Mammary epithelial cell (primary cell): ENCODE measurements at regions of chr9 and their contacts with region 1.

Region 1: GRCh38 chr9:115524453-115525059 is 406.6 kb upstream of the TNC start:
- DNase-seq: peak; percentile 60
- H3K4me3 ChIP-seq: no peak overlapping the region
- H3K27ac ChIP-seq: no peak overlapping the region
- H3K4me1 ChIP-seq: no peaks in the 10 kb centered on the region
- H3K27me3 ChIP-seq: no peaks in the 10 kb centered on the region
- CTCF ChIP-seq: peak; percentile 69 to 80

Region 2: GRCh38 chr9:114738581-114739316 is 785.8 kb before region 1 on chr9:
- CTCF ChIA-PET with region 1: no interaction called
- dilution Hi-C with region 1: no loop called
- in situ Hi-C with region 1: no loop called
- intact Hi-C with region 1: loop called (anchors 2 kb)
- DNase-seq: peak; percentile 78
- H3K4me3 ChIP-seq: no peak overlapping the region
- H3K27ac ChIP-seq: no peak overlapping the region
- H3K4me1 ChIP-seq: peaks cover 5% of the 10 kb centered on the region
- H3K27me3 ChIP-seq: no peaks in the 10 kb centered on the region
- CTCF ChIP-seq: peak; percentile 71 to 81

Region 3: DNA sequence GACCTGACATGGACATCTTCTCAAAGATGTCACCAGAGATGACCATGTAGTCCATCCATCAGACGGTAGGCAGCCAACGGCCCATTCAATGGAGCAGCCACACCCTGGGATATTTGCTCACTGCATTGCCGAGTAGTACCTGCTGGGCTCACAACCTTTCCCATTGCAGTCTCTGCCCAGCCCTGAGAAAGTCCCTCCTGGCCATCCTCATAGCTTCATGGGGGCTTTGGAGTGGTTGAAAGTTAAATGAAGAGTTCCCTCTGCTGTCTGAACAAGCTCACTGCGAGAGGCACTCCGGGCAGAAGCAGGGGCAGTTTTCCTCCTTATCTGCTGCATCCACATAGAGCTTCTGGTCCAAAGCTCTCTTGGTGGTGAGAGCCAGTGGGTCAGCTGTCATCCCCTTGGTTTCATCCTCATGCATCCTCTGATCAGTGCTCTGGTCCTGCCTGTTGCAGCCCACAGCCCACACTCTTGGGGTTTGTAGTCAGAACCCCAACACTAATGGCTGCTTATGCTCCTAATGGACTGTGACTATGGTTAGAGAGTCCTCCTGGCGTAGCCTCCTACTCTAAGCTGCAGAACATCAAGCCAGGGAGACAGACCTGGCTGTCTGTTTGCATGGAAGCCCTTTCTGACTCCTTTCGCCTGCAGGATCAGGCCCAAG is 617.5 kb before region 1 on chr9:
- CTCF ChIA-PET with region 1: no interaction called
- dilution Hi-C with region 1: no loop called
- in situ Hi-C with region 1: no loop called
- intact Hi-C with region 1: loop called (anchors 1 kb)
- DNase-seq: peak; percentile 48
- H3K4me3 ChIP-seq: no peak overlapping the region
- H3K27ac ChIP-seq: no peak overlapping the region
- H3K4me1 ChIP-seq: peaks cover 31% of the 10 kb centered on the region
- H3K27me3 ChIP-seq: no peaks in the 10 kb centered on the region
- CTCF ChIP-seq: peak; percentile 61 to 62

Region 4: DNA sequence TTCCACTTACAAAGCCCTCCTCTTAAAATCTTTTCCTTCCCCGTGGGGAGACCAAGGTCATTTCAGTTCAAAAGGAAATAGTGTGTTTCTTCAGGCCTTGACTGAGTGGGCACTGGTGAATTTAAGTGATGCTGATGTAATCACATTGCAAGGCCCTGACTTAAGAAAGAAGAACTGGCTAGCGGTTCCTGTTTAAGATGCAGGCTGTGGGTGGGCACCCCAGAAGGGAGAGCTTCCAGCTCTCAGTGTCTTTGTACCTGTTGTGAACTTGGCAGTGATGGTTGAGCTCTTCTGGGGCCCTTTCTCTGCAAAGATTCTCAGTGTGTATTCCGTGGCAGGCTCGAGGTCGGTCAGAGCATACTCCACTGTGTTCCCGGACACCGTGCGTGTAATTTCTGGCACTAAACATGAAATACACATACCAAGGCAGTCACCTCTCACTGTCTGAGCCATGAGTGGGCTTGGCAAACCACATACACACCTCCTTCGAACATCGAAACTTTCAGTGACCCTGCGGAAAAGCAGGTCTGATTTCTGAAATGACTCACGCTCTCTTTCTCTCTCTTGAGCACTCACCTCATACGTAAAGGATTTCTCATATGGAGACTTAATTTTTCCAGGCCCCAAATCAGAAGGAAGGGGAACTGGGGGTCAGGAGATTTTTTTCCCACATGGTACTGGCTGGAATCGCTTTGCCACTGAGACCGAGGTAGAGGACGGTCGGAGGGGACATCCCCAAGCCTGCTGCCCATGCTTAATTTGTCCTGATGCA is 488.5 kb before region 1 on chr9:
- CTCF ChIA-PET with region 1: no interaction called
- dilution Hi-C with region 1: no loop called
- in situ Hi-C with region 1: no loop called
- intact Hi-C with region 1: loop called (anchors 1 kb)
- DNase-seq: peak; percentile 99
- H3K4me3 ChIP-seq: no peak overlapping the region
- H3K27ac ChIP-seq: peak overlapping the region; percentile 99
- H3K4me1 ChIP-seq: peaks cover 34% of the 10 kb centered on the region
- H3K27me3 ChIP-seq: no peaks in the 10 kb centered on the region
- CTCF ChIP-seq: no peak

Region 5: GRCh38 chr9:115204904-115205453 is 319.6 kb before region 1 on chr9:
- CTCF ChIA-PET with region 1: no interaction called
- dilution Hi-C with region 1: no loop called
- in situ Hi-C with region 1: no loop called
- intact Hi-C with region 1: loop called (anchors 1 kb)
- DNase-seq: peak; percentile 92
- H3K4me3 ChIP-seq: no peak overlapping the region
- H3K27ac ChIP-seq: peak overlapping the region; percentile 63
- H3K4me1 ChIP-seq: peaks cover 65% of the 10 kb centered on the region
- H3K27me3 ChIP-seq: no peaks in the 10 kb centered on the region
- CTCF ChIP-seq: no peak

Region 6: DNA sequence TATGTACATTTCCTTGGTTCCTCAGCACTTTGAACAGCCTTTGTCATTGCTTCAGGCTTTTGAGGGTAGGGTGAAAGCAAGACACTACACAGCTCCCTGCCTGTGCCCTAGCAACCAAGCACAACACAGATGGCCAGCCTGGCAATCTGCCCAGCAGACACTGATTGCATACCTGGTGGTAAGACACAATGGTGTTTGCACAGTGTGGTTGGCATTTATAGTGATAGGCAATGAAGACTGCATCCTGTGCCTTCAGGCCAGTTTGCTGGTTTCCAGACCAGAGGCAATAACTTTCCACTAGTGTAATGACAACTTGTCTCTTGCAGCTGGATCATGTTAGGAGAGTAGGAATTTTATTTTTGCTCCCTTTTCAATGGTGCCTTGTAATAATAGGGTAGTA is 262.1 kb before region 1 on chr9:
- CTCF ChIA-PET with region 1: no interaction called
- dilution Hi-C with region 1: no loop called
- in situ Hi-C with region 1: no loop called
- intact Hi-C with region 1: loop called (anchors 1 kb)
- DNase-seq: peak; percentile 100
- H3K4me3 ChIP-seq: no peak overlapping the region
- H3K27ac ChIP-seq: peak overlapping the region; percentile 100
- H3K4me1 ChIP-seq: peaks cover 41% of the 10 kb centered on the region
- H3K27me3 ChIP-seq: no peaks in the 10 kb centered on the region
- CTCF ChIP-seq: no peak